ENCODE measurements at regions of chr11 and their contacts with region 1.

Region 1: DNA sequence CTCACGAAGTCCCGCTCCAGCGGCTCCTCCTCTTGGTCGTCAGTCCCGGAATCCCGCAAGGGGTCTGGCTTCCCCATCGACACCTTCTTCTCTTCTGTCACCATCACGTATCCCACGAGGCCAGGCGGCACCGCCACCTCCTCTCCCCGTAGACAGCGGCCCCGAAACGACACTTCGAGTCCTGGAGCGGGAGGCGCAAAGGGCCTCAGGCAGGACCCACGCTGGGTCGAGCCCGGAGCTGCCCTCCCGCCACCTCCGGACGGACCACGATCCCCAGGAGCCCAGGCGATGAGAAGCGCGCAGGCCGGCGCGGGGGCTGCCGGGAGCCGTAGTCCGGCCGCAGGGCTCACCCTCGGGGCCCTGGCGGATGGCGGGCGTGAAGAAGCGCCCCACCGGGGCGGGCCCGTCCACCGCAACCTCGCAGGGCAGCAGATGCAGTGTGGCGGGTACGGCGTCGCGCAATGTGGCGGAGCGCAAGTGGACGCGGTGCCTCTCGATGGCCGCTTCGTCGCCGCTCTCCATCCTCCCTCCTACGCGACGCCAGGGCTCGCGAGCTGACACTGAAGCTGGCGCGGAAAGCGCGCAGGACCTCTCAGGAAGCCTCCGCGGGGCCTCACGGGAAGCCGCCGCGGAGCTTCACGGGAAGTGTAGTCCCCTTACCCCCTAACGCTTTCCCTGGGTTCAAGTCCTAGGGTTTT is at the start of gene RNASEH2C:
- DNase-seq: peak; percentile 93
- CTCF ChIP-seq: no peak

Region 2: GRCh38 chr11:65633390-65634108 is 86.8 kb before region 1 on chr11:
- CTCF ChIA-PET with region 1: no interaction called
- POLR2A ChIA-PET with region 1: no interaction called
- DNase-seq: no peak
- CTCF ChIP-seq: no peak

Region 3: DNA sequence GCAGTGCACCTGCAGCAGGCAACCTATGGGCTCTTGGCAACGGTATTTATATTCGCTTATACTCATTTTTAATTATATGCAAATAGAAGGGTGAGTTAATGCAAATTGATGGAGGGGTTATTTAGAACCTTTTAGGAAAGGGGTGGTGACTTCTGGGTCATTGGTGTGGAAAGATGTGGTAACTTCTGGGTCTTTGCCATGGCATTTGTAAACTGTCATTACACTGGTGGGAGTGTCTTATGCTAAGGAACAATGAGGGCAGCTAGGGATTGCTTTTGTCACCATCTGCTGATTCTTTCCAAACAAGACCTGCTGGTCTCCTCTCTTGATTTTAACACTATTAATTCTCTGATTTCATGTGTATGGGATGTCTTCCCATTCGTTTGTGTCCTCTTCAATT is 20.0 kb before region 1 on chr11:
- CTCF ChIA-PET with region 1: interaction called, 12 read pairs
- POLR2A ChIA-PET with region 1: no interaction called
- DNase-seq: no peak
- CTCF ChIP-seq: no peak

Region 4: GRCh38 chr11:65766535-65766934 is 46.1 kb after region 1 on chr11:
- CTCF ChIA-PET with region 1: interaction called, 13 read pairs
- POLR2A ChIA-PET with region 1: no interaction called
- DNase-seq: no peak
- CTCF ChIP-seq: no peak

Region 5: DNA sequence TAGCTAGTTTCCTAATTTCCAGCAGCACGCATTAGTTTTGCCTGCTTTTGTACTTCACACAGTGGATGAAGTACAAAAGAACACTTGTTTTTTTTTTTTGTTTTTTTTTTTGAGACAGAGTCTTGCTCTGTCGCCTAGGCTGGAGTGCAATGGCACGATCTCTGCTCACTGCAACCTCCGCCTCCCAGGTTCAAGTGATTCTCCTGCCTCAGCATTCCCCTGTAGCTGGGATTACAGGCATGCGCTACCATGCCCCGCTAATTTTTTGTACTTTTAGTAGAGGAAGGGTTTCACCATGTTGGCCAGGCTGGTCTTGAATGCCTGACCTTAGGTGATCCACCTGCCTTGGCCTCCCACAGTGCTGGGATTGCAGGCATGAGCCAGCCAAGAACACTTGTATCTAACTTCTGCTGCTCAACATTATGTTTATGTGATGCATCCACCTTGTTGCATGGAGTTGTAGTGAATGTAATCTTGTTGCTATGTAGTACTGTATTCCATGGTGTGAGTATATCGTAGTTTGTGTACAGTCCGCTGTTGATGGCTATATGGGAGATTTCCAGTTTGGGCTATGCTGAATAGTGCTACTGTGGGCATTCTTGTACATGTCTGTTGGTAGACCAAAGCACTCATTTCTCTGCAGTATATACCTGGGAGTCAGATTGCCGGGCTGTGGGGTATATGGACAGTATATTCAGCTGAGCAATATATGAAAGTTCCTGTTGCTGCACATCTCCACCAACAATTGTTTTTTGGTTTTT is 366.9 kb after region 1 on chr11:
- CTCF ChIA-PET with region 1: no interaction called
- POLR2A ChIA-PET with region 1: no interaction called
- DNase-seq: no peak
- CTCF ChIP-seq: no peak

Measured in GM10248 (cell line).